ENCODE measurements at regions of chr6 and their contacts with region 1.

Region 1: GRCh38 chr6:36765594-36766398 is 68.2 kb downstream of the RAB44 start:
- DNase-seq: peak; percentile 78 to 88 (median 82)
- H3K4me3 ChIP-seq: no peak overlapping the region
- H3K27ac ChIP-seq: peak overlapping the region in 1 of 2 donors; percentile 5
- H3K4me1 ChIP-seq: peaks cover 11% of the 10 kb centered on the region
- H3K27me3 ChIP-seq: no peaks in the 10 kb centered on the region
- CTCF ChIP-seq: peak; percentile 19 to 84 (median 83)
- EP300 ChIP-seq: no peak
- POLR2A ChIP-seq: no peak

Region 2: GRCh38 chr6:36851149-36851614 is 85.4 kb after region 1 on chr6:
- intact Hi-C with region 1: loop called (anchors 2 to 5 kb)
- DNase-seq: peak in 2 of 5 donors; percentile 48 to 76
- H3K4me3 ChIP-seq: no peak overlapping the region
- H3K27ac ChIP-seq: no peak overlapping the region
- H3K4me1 ChIP-seq: no peaks in the 10 kb centered on the region
- H3K27me3 ChIP-seq: no peaks in the 10 kb centered on the region
- CTCF ChIP-seq: peak; percentile 38 to 69 (median 63)
- EP300 ChIP-seq: no peak
- POLR2A ChIP-seq: no peak

Region 3: DNA sequence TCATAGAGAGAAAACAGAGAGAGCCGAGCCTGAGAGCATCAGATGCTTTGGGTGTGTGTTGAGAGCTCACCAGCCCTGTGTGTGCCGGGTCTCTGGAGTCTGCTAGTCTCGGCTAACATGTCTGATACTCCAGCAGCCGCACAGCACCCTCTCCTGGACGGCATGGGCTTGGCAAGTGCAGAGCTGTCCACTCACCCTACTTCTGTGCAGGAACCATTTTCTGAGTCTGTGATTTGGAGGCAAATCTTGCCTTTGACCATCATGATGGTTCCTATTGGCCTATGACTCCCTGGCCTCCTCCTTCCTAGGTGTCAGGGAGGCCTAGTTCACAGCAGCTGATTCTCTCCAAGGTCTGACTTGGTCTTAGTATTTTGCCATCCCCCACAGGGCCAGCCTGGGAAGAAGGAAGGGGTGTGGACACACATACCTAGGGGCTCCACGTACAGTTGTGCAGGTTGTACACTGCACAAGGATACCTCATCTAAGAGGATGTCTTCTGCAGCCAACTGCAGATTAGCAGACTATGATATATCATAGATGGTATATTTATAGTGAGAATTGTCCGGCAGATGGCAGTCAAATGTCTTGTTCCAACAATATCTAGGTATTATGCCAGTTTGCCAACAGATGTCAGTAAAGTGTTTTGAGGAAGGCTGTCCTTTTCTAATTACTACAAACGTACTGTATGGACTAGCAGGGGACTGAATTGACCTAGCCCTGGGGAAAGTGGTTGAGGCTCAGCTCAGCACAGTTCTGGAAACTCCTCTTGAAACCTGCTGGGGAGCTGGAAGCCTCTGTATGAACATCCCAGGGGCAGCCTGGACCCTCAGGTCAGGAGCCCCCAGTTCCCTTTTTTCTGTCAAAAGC is 252.6 kb after region 1 on chr6:
- intact Hi-C with region 1: loop called (anchors 5 to 10 kb)
- DNase-seq: peak; percentile 89 to 94 (median 91)
- H3K4me3 ChIP-seq: no peak overlapping the region
- H3K27ac ChIP-seq: no peak overlapping the region
- H3K4me1 ChIP-seq: no peaks in the 10 kb centered on the region
- H3K27me3 ChIP-seq: no peaks in the 10 kb centered on the region
- CTCF ChIP-seq: peak; percentile 70 to 81 (median 80)
- EP300 ChIP-seq: no peak
- POLR2A ChIP-seq: no peak

Region 4: GRCh38 chr6:37239950-37240713 is 474.3 kb after region 1 on chr6:
- intact Hi-C with region 1: no loop called
- DNase-seq: peak; percentile 94 to 99 (median 97)
- H3K4me3 ChIP-seq: no peak overlapping the region
- H3K27ac ChIP-seq: peak overlapping the region in 1 of 2 donors; percentile 92
- H3K4me1 ChIP-seq: peaks cover 16% of the 10 kb centered on the region
- H3K27me3 ChIP-seq: no peaks in the 10 kb centered on the region
- CTCF ChIP-seq: no peak
- EP300 ChIP-seq: peak; percentile 87
- POLR2A ChIP-seq: no peak

Measured in ovary (tissue), 10 donors.